ENCODE measurements at regions of chr16 and their contacts with region 1.

Region 1: GRCh38 chr16:52191531-52192134 is 355.3 kb downstream of the TOX3 start:
- DNase-seq: peak; percentile 64
- H3K27ac ChIP-seq: no peak overlapping the region
- CTCF ChIP-seq: peak; percentile 92

Region 2: GRCh38 chr16:52068447-52069074 is 123.1 kb before region 1 on chr16:
- CTCF ChIA-PET with region 1: interaction called, 12 read pairs
- POLR2A ChIA-PET with region 1: no interaction called
- DNase-seq: peak; percentile 9
- H3K27ac ChIP-seq: no peak overlapping the region
- CTCF ChIP-seq: peak; percentile 52

Region 3: DNA sequence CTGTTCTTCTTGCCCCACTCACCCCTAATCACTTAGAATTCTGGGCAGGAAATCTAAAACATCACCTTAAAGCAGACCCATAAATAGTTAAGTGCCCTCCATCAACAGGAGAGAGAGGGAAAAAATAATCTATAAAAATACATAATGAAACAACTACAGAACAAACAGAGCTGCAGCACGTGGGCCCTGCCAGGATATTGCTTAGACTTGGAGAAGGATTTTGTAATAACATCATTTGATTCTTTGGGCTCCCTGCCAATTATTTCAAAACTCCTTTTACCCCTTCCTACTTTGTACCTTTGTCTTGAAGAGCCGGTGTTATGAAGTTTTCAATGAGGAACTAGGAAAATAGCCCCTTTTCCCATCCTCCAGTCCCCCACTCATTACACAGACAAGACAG is 485.9 kb after region 1 on chr16:
- CTCF ChIA-PET with region 1: no interaction called
- POLR2A ChIA-PET with region 1: no interaction called
- DNase-seq: no peak
- H3K27ac ChIP-seq: no peak overlapping the region
- CTCF ChIP-seq: no peak

Region 4: GRCh38 chr16:52861614-52862022 is 670.0 kb after region 1 on chr16:
- CTCF ChIA-PET with region 1: interaction called, 10 read pairs
- POLR2A ChIA-PET with region 1: no interaction called
- DNase-seq: peak; percentile 23
- H3K27ac ChIP-seq: no peak overlapping the region
- CTCF ChIP-seq: no peak

Region 5: DNA sequence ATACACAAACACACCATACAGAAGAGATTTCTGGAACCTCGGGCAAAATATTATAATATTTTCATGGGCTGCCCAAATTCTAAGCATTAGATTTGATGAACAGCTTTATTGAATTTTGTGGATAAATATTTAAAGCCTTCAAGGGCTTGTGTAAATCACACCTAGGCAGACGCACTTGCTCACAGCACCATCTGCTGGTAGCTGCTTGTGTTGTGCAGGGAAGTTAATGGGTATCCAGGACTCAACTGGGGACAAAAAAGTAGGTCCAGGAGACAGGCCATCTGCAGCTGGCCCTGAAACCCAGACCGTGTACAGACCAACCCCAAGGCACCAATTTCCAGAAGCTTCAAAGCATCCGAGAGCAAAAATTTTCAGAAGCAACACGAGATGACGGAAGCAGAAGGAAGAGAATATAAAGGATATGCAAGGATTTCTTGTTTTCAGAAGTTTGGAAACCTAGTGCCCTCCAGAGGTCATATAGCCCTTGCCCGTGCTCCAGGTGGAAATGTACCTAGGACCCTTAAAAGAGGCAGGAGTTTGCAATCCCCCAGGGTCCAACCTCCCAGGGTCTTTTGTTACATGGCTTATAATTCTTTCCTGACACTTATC is 721.0 kb after region 1 on chr16:
- CTCF ChIA-PET with region 1: interaction called, 36 read pairs
- POLR2A ChIA-PET with region 1: no interaction called
- DNase-seq: peak; percentile 66
- H3K27ac ChIP-seq: no peak overlapping the region
- CTCF ChIP-seq: peak; percentile 84

Region 6: GRCh38 chr16:53022374-53022773 is 830.7 kb after region 1 on chr16:
- CTCF ChIA-PET with region 1: interaction called, 12 read pairs
- POLR2A ChIA-PET with region 1: no interaction called
- DNase-seq: peak; percentile 70
- H3K27ac ChIP-seq: no peak overlapping the region
- CTCF ChIP-seq: peak; percentile 54